ENCODE measurements at regions of chr4 and their contacts with region 1.

Region 1: DNA sequence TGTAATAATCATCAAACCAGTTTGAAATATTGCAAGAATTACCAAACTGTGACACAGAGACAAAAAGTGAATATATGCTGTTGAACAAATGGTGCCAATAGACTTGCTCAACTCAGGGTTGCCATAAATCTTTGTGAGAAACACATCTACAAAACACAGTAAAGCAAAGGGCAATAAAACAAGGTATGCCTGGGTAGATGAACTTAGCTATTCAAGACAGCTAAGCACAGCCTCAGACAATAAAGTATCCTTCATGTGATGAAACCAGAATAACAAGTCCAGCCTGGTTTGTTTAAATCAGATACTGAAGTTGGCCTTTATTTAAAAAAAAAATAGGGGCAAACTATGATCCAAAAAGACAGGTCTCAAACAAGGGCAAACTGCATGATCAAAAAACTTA is 19.2 kb downstream of the LAMTOR3 start:
- DNase-seq: no peak
- CTCF ChIP-seq: no peak

Region 2: DNA sequence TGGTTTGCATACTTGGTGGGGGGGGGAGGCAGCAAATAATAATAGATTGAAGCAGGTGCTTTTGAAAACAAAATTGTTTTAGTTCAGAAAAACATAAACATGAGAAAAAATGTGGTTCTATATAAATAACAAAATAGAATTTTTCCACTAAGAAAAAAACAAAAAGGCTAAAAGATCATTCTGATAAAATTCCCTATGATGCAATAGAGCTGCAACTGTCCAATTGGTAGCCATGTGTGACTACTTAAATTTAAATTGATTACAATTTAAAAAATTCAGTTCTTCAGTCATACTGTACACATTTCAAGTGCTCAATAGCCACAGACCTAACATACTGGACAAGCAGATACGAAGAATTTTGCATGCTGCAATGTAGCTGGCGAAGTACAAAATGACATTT is 322.2 kb before region 1 on chr4:
- in situ Hi-C with region 1: loop called (anchors 10 kb)
- DNase-seq: no peak
- CTCF ChIP-seq: no peak